ENCODE measurements at regions of chr17 and their contacts with region 1.

Region 1: GRCh38 chr17:42677921-42678781 is 1.4 kb upstream of the PLEKHH3 start:
- DNase-seq: peak; percentile 95
- H3K4me3 ChIP-seq: peak overlapping the region; percentile 77 to 93 (median 88)
- H3K27ac ChIP-seq: peak overlapping the region; percentile 96 to 99 (median 98)
- H3K4me1 ChIP-seq: peaks cover 72 to 90% (median 88%) of the 10 kb centered on the region in 4 donors
- H3K27me3 ChIP-seq: no peaks in the 10 kb centered on the region
- CTCF ChIP-seq: no peak
- EP300 ChIP-seq: no peak
- POLR2A ChIP-seq: no peak

Region 2: GRCh38 chr17:42266918-42267778 is 411.0 kb before region 1 on chr17:
- intact Hi-C with region 1: no loop called
- DNase-seq: no peak
- H3K4me3 ChIP-seq: no peak overlapping the region
- H3K27ac ChIP-seq: no peak overlapping the region
- H3K4me1 ChIP-seq: peaks cover 4 to 42% (median 37%) of the 10 kb centered on the region in 4 donors
- H3K27me3 ChIP-seq: no peaks in the 10 kb centered on the region
- CTCF ChIP-seq: no peak
- EP300 ChIP-seq: no peak
- POLR2A ChIP-seq: no peak

Region 3: DNA sequence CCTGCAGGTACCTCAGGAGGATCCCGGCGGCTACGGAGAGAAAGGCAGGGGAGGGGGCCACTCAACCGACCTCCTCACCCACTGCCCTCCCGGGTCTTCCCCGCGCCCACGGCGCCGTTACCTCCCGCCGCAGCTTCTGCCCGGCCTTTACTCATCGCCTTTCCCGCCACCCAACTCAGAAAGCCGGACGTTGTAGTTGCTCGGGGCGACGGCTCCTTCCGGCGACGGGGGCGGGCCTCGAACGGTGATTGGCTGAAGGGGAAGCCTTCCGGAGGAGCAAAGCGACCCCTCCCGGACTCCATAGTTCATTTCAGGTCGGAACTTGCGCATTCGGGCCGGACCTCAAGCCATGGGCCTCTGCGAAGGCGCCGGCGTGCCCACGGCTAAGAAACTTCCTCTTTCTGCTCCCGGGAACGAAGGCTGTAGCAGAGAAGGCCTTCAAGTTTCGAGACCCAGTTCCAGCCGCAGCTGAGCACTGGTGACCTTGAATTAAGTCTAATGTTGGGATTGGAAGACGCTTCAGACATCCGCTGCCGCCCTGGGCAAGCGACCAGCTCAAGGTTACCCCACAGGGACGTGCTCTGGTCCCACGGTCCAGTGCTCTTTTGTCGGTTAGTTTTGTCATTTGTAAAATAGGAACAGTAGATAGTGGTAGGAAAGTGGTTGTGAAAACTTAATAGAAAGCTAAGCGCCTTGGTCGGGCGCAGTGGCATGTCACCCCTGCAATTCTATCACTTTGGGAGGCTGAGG is 100.4 kb before region 1 on chr17 and contains the start of gene PSMC3IP:
- intact Hi-C with region 1: loop called (anchors 2 kb)
- DNase-seq: peak; percentile 99
- H3K4me3 ChIP-seq: peak within 1 kb of the TSS; percentile 61 to 73 (median 70)
- H3K27ac ChIP-seq: peak within 1 kb of the TSS; percentile 84 to 91 (median 88)
- H3K4me1 ChIP-seq: peaks cover 20 to 28% (median 24%) of the 10 kb centered on the region in 4 donors
- H3K27me3 ChIP-seq: no peaks in the 10 kb centered on the region
- CTCF ChIP-seq: peak in 2 of 3 experiments; percentile 33 to 47
- EP300 ChIP-seq: no peak
- POLR2A ChIP-seq: peak; percentile 20
- total RNA-seq, gene PSMC3IP: 2.2 to 5.0 (median 4.2) TPM

Region 4: GRCh38 chr17:42609182-42609813 is 68.9 kb before region 1 on chr17 and contains the starts of genes RETREG3 and TUBG1:
- intact Hi-C with region 1: loop called (anchors 2 kb)
- DNase-seq: peak; percentile 99
- H3K4me3 ChIP-seq: peak within 1 kb of the TSS; percentile 72 to 97 (median 86)
- H3K27ac ChIP-seq: peak within 1 kb of the TSS; percentile 89 to 95 (median 94)
- H3K4me1 ChIP-seq: peaks cover 31 to 52% (median 52%) of the 10 kb centered on the region in 4 donors
- H3K27me3 ChIP-seq: no peaks in the 10 kb centered on the region
- CTCF ChIP-seq: peak; percentile 19 to 53 (median 48)
- EP300 ChIP-seq: no peak
- POLR2A ChIP-seq: peak; percentile 59
- total RNA-seq, gene RETREG3: 42.7 to 93.3 (median 57.0) TPM
- total RNA-seq, gene TUBG1: 30.6 to 89.0 (median 55.0) TPM

Measured in esophagus muscularis mucosa (tissue), 4 donors.